CD8-positive, alpha-beta T cell (primary cell): ENCODE measurements at regions of chr6 and their contacts with region 1.

Region 1: GRCh38 chr6:138987640-138988468 is at the start of gene REPS1:
- DNase-seq: peak; percentile 79 to 97 (median 90)
- ATAC-seq: peak; percentile 88
- H3K4me3 ChIP-seq: peak within 1 kb of the TSS; percentile 74 to 79
- H3K4me3 Mint-ChIP-seq: peak within 1 kb of the TSS; percentile 86
- H3K27ac ChIP-seq: peak within 1 kb of the TSS; percentile 68 to 81
- H3K27ac Mint-ChIP-seq: peak within 1 kb of the TSS; percentile 85
- H3K4me1 ChIP-seq: peaks cover 42% of the 10 kb centered on the region
- H3K4me1 Mint-ChIP-seq: peaks cover 6% of the 10 kb centered on the region
- H3K27me3 ChIP-seq: no peaks in the 10 kb centered on the region
- H3K27me3 Mint-ChIP-seq: no peaks in the 10 kb centered on the region
- CTCF ChIP-seq: peak; percentile 99
- total RNA-seq, gene REPS1: 50.4 to 60.3 TPM

Region 2: DNA sequence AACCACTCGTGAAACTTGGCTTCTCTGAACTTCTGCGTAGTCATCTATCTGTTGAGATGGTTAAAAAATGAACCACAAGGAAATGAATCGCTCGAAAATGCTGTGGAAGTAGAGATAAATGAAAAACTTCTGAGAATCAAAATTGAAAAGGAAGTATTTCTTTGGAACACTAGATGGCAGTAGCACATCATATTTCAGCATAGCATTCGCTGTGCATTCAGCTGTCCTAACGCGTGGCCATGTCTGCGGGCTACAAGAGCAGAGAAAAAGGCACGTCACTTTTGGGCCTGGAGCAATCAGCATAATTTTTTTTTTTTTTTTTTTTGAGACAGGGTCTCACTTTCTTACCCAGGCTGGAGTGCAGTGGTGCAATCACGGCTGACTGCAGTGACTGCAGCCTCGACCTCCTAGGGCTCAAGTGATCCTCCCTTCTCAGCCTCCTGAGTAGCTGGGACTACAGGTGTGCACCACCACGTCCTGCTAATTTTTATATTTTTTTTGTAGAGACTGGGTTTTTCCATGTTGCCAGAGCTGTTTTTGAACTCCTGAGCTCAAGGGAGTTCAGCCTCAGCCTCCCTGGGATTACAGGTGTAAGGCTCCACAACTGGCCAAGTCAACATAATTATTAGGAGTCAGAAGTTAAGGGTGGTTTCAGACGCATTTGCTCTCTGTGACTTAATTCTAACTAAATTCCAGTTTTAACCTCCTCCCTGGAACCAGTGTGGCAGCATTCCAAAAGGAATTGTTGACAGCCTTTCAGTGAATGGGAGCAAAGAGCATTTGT is 871.8 kb before region 1 on chr6:
- CTCF ChIA-PET with region 1: no interaction called
- POLR2A ChIA-PET with region 1: no interaction called
- intact Hi-C with region 1: loop called in 1 of 2 experiments (anchors 10 kb)
- DNase-seq: peak in 8 of 9 experiments; percentile 9 to 80 (median 41)
- ATAC-seq: peak; percentile 83
- H3K4me3 ChIP-seq: no peak overlapping the region
- H3K4me3 Mint-ChIP-seq: no peak overlapping the region
- H3K27ac ChIP-seq: no peak overlapping the region
- H3K27ac Mint-ChIP-seq: no peak overlapping the region
- H3K4me1 ChIP-seq: no peaks in the 10 kb centered on the region
- H3K4me1 Mint-ChIP-seq: peaks cover 4% of the 10 kb centered on the region
- H3K27me3 ChIP-seq: peaks cover 0 to 6% of the 10 kb centered on the region in 2 experiments
- H3K27me3 Mint-ChIP-seq: peaks cover 25% of the 10 kb centered on the region
- CTCF ChIP-seq: peak; percentile 90

Region 3: DNA sequence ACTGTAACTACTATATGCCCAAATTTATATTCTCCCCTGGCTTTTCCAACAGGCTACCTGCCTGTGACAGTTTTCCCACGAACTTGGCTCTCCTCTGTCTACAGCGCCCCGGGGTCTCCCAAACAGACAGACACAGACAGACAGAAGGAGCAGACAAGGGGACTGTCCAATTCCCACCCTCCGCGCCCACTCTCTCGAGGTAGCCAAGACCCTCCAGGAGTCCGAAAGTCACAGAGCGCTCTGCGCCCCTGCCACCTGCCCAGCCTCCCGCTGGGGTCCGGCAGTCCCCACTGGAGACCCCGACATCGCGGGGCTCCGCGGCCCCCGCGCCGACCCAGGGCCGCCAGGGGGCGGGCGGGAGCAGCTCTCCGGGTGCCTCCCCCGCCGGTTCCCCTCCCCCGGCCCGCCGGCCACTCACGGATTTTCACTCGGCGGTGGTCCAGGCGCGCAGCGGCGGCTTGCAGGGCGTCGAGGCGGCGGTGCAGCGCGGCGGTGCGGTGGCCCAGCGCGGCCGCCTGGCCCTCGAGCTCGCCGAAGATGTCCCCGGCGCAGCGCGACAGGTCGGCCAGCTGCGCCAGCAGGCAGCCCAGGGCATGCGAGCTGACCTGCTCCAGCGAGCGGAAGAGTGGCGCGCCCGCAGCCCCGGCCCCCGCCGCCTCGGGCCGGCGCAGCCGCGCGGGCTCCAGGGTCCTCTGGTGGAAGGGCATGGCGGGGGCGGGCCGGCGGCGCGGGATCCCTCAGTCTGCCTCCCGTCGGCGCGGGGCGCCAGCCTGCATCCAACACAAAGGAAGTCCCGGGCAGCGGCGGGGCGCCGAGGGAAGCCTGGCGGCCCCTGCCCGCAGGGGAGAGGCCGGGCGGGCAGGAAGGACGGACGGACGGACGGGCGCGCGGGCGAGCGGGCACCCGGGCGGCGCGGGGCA is 295.5 kb before region 1 on chr6:
- CTCF ChIA-PET with region 1: no interaction called
- POLR2A ChIA-PET with region 1: no interaction called
- intact Hi-C with region 1: loop called in 1 of 2 experiments (anchors 5 kb)
- DNase-seq: peak; percentile 14 to 78 (median 48)
- ATAC-seq: peak; percentile 68
- H3K4me3 ChIP-seq: peak overlapping the region in 1 of 2 experiments; percentile 23
- H3K4me3 Mint-ChIP-seq: peak overlapping the region; percentile 81
- H3K27ac ChIP-seq: no peak overlapping the region
- H3K27ac Mint-ChIP-seq: no peak overlapping the region
- H3K4me1 ChIP-seq: peaks cover 5% of the 10 kb centered on the region
- H3K4me1 Mint-ChIP-seq: peaks cover 10% of the 10 kb centered on the region
- H3K27me3 ChIP-seq: peaks cover 0 to 6% of the 10 kb centered on the region in 2 experiments
- H3K27me3 Mint-ChIP-seq: peaks cover 30% of the 10 kb centered on the region
- CTCF ChIP-seq: peak; percentile 65

Region 4: DNA sequence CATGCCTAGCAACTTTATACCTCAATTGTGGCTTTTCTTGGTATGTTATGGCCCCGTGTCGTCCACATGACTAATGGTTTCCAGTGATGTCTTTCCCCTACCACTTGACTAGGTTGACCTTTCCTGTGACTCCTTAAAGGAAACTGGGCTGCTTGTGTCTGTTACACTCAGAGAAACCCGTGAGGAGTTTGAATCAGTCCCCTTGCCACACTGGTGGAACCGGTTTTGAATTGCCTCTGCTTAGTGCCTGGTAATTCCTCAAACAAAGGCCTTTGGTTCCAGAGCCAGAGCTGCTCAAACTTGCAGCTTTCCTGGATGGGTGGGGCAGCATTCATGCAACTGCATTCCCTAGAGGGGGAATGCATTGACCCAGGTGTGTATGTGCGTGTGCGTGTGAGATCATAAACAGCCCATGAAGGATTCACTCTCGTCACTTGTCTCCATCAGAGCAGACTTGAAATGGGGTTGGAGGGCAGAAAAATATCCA is 170.0 kb before region 1 on chr6:
- CTCF ChIA-PET with region 1: interaction called, 9 read pairs
- POLR2A ChIA-PET with region 1: no interaction called
- intact Hi-C with region 1: loop called (anchors 1 to 2 kb)
- DNase-seq: no peak
- ATAC-seq: no peak
- H3K4me3 ChIP-seq: no peak overlapping the region
- H3K4me3 Mint-ChIP-seq: no peak overlapping the region
- H3K27ac ChIP-seq: no peak overlapping the region
- H3K27ac Mint-ChIP-seq: no peak overlapping the region
- H3K4me1 ChIP-seq: no peaks in the 10 kb centered on the region
- H3K4me1 Mint-ChIP-seq: no peaks in the 10 kb centered on the region
- H3K27me3 ChIP-seq: no peaks in the 10 kb centered on the region
- H3K27me3 Mint-ChIP-seq: no peaks in the 10 kb centered on the region
- CTCF ChIP-seq: no peak

Region 5: DNA sequence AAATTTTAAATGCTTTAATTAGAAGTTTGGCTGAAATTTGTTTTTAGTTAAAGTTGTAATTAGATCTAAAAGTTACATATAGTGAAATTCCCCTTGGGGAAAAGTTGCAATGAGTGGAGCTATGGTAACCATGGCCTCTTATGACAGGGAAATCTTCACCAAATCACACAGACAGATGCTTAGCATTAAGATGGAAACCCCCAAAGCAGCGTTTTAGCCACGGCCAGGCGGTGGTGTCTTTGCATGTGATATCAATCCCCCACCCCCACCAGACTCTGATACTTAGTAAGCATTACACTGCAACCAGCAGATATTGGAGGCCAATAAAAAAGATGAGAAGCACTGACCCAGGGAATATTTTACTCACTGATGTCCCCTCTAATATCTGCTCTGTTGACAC is 75.5 kb before region 1 on chr6:
- CTCF ChIA-PET with region 1: no interaction called
- POLR2A ChIA-PET with region 1: no interaction called
- intact Hi-C with region 1: no loop called
- DNase-seq: peak in 2 of 9 experiments; percentile 5 to 14
- ATAC-seq: no peak
- H3K4me3 ChIP-seq: no peak overlapping the region
- H3K4me3 Mint-ChIP-seq: no peak overlapping the region
- H3K27ac ChIP-seq: no peak overlapping the region
- H3K27ac Mint-ChIP-seq: no peak overlapping the region
- H3K4me1 ChIP-seq: no peaks in the 10 kb centered on the region
- H3K4me1 Mint-ChIP-seq: no peaks in the 10 kb centered on the region
- H3K27me3 ChIP-seq: no peaks in the 10 kb centered on the region
- H3K27me3 Mint-ChIP-seq: no peaks in the 10 kb centered on the region
- CTCF ChIP-seq: no peak

Region 6: DNA sequence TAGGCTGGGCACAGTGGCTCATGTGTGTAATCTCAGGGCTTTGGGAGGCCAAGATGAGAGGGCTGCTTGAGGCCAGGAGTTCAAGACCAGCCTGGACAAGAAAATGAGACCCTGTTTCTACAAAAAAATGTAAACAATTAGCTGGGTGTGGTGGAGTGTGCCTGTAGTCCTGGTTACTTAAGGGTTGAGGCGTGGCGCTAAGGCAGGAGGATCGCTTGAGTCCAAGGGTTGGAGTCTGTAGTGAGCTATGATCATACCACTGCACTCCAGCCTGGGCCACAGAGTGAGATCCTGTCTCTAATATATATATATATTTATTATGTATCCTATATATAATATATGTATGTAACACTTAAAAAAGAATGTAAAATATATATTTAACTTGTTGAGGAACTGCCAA is 32.8 kb after region 1 on chr6:
- CTCF ChIA-PET with region 1: interaction called, 10 read pairs
- POLR2A ChIA-PET with region 1: interaction called, 3 read pairs
- intact Hi-C with region 1: no loop called
- DNase-seq: no peak
- ATAC-seq: no peak
- H3K4me3 ChIP-seq: no peak overlapping the region
- H3K4me3 Mint-ChIP-seq: no peak overlapping the region
- H3K27ac ChIP-seq: no peak overlapping the region
- H3K27ac Mint-ChIP-seq: no peak overlapping the region
- H3K4me1 ChIP-seq: no peaks in the 10 kb centered on the region
- H3K4me1 Mint-ChIP-seq: no peaks in the 10 kb centered on the region
- H3K27me3 ChIP-seq: no peaks in the 10 kb centered on the region
- H3K27me3 Mint-ChIP-seq: no peaks in the 10 kb centered on the region
- CTCF ChIP-seq: no peak

Region 7: DNA sequence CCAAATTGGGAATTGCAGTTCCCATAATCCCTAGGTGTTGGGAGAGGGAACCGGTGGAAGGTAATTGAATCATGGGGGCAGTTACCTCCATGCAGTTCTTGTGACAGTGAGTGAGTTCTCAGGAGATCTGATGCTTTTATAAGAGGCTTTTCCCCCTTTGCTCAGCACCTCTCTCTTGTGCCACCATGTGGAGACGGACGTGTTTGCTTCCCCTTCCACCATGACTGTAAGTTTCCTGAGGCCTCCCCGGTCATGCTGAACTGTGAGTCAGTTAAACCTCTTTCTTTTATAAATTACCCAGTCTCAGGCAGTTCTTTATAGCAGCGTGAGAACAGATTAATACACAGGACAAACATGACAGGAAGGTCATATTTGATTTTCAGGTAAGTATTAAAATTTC is 121.7 kb after region 1 on chr6:
- CTCF ChIA-PET with region 1: interaction called, 8 read pairs
- POLR2A ChIA-PET with region 1: interaction called, 7 read pairs
- intact Hi-C with region 1: loop called (anchors 5 kb)
- DNase-seq: peak in 3 of 9 experiments; percentile 39 to 50 (median 42)
- ATAC-seq: no peak
- H3K4me3 ChIP-seq: no peak overlapping the region
- H3K4me3 Mint-ChIP-seq: no peak overlapping the region
- H3K27ac ChIP-seq: no peak overlapping the region
- H3K27ac Mint-ChIP-seq: peak overlapping the region; percentile 64
- H3K4me1 ChIP-seq: peaks cover 52% of the 10 kb centered on the region
- H3K4me1 Mint-ChIP-seq: peaks cover 73% of the 10 kb centered on the region
- H3K27me3 ChIP-seq: no peaks in the 10 kb centered on the region
- H3K27me3 Mint-ChIP-seq: no peaks in the 10 kb centered on the region
- CTCF ChIP-seq: peak; percentile 28

Region 8: GRCh38 chr6:139369568-139370282 is 381.9 kb after region 1 on chr6:
- CTCF ChIA-PET with region 1: interaction called, 21 read pairs
- POLR2A ChIA-PET with region 1: interaction called, 12 read pairs
- intact Hi-C with region 1: loop called (anchors 1 to 5 kb)
- DNase-seq: peak in 2 of 9 experiments; percentile 56 to 69
- ATAC-seq: no peak
- H3K4me3 ChIP-seq: no peak overlapping the region
- H3K4me3 Mint-ChIP-seq: peak overlapping the region; percentile 66
- H3K27ac ChIP-seq: peak overlapping the region in 1 of 2 experiments; percentile 86
- H3K27ac Mint-ChIP-seq: peak overlapping the region; percentile 98
- H3K4me1 ChIP-seq: peaks cover 31% of the 10 kb centered on the region
- H3K4me1 Mint-ChIP-seq: peaks cover 49% of the 10 kb centered on the region
- H3K27me3 ChIP-seq: no peaks in the 10 kb centered on the region
- H3K27me3 Mint-ChIP-seq: no peaks in the 10 kb centered on the region
- CTCF ChIP-seq: peak; percentile 88